G401 (cell line): ENCODE measurements at regions of chr5 and their contacts with region 1.

Region 1: DNA sequence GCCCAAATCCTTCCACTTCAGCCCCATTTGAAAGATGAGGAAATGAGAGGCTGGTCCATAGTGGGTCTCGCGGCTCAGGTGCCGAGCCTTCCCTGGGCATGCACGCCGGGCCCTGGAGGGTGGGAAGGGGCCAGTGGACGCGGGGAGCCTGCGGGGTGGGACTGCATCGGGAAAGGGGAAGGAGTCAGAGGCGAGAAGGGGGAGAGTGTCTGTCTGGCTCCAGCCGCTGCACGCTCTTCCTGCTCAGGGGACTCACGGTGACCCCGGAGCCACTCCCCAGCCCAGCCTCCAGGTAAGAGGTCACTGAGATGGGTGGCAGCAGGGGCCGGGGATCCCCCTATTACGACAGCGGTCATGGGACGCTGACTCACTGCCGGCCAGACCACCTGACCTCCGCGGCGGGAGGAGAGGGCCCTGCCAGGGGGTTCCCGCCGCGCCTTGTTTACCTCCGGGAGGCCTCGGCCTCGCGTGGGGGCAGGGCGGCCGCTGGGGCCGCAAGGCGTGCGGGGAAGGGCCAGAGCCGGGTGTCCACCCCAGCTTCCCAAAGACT is 1.9 kb upstream of the SQSTM1 start:
- DNase-seq: peak; percentile 82

Region 2: GRCh38 chr5:179759581-179760551 is 59.0 kb before region 1 on chr5:
- in situ Hi-C with region 1: loop called (anchors 10 kb)
- DNase-seq: no peak

Region 3: DNA sequence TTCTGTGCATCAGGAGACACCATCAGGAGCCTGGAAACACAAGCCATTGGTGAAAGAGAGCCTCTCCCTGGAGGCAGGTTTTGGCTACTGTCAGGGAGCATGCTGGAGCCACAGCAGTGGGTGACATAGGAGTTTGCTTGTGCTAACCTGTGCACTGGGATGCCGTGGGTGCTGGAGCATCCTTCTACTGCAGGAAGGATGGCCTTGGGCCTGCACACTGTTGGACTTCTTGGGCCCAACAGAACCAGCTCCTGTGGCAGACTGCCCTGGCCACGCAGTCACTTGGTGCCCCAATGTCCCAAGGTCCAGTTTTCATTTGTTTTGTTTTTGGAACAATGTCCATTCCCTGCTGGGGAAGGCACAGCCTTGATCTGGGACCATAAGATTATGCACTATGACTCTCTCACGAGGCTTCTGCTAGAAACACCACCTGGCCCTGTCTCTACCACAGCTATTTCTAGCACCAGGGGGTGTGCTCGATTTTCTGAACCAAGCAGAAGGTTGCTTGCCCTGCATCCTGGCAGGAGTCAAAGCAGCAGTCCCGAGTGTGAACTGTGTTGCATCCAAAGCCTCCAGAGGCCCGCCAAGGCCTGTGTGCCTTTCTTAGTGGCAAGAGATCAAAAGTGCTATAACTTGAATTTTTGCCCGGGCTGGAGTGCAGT is 30.5 kb before region 1 on chr5:
- in situ Hi-C with region 1: no loop called
- DNase-seq: peak; percentile 71